Aorta (tissue), 5 donors: ENCODE measurements at regions of chr2 and their contacts with region 1.

Region 1: DNA sequence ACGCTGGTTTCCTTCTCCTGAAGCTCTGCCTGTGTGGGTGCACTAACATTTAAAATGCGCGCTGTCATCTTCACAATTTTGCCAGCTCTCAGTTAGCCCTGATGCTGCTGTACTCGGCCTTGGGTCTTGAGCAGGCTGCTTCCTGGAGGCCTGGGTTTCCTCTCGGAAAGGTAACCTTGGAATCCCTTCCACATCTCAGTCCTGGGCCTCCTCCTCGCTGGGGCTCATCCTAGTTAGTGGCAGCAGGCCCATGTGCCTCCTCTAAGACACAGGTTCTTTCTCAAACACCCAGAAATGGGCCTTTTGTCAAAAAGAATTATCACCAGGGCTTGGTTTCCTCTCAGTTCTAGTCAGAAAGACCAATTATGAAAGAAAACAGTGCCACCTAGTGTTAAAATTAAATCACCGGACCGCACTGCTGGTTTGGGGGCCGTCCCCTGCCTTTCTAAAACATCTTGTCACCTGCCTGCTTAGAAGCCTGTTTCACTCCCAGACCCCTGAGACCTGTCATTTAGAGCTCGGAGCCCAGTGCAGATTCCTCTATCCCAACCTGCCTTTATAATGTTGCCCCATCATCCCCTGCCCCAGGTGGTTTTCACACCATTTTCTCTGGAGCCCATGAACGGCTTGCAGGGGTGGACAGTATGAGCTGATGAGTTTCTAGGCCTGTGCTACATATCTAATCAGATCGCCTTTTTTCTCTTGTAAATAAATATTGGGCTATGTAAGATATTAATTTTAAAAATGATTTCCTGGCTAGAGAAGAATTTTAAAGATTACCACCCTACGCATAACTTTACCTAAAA is 42.4 kb downstream of the HK2 start:
- DNase-seq: no peak
- ATAC-seq: peak; percentile 83
- H3K4me3 ChIP-seq: no peak overlapping the region
- H3K27ac ChIP-seq: no peak overlapping the region
- H3K4me1 ChIP-seq: no peaks in the 10 kb centered on the region
- H3K27me3 ChIP-seq: no peaks in the 10 kb centered on the region

Region 2: GRCh38 chr2:74690571-74690970 is 185.7 kb before region 1 on chr2:
- intact Hi-C with region 1: loop called (anchors 1 to 5 kb)
- DNase-seq: no peak
- ATAC-seq: peak; percentile 87
- H3K4me3 ChIP-seq: no peak overlapping the region
- H3K27ac ChIP-seq: no peak overlapping the region
- H3K4me1 ChIP-seq: no peaks in the 10 kb centered on the region
- H3K27me3 ChIP-seq: no peaks in the 10 kb centered on the region

Region 3: DNA sequence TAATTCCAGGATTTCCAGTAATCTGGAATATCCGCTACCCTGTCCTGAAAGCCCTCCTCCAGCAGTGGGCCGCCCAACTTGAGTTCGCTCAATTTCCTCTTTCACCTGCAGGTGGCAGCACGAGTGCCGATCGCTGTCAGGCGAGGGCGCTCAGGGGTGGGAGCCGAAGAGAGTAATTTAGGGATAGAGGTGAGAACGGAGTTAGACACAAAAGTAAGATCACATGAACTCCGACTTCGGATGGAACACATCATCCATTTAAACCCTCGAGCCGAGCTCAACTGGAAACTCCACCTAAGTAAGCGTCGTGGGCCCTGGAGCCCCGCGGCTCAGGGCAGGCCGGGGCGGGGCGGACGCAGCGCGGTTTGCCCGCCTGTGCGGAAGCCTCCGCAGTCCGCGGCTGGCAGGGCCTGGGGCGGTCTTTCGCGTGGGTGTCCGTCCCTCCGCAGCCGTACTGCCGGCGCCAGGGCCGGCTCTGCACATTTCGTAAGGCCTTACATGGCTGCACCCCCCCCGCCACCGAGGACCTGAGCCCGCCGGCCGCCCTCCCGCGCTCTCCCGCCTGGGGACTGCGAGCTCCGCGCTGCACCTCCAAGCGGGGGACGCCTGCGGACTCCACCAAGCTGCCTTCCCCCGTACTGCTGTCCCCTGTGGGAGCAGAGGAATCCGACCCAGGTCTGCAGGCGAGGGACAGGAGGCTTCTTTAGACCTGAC is 161.0 kb before region 1 on chr2:
- intact Hi-C with region 1: loop called (anchors 1 to 2 kb)
- DNase-seq: peak; percentile 86 to 94
- ATAC-seq: peak; percentile 95
- H3K4me3 ChIP-seq: peak overlapping the region; percentile 31 to 32
- H3K27ac ChIP-seq: peak overlapping the region in 1 of 2 donors; percentile 11
- H3K4me1 ChIP-seq: no peaks in the 10 kb centered on the region
- H3K27me3 ChIP-seq: no peaks in the 10 kb centered on the region

Region 4: GRCh38 chr2:74816540-74817303 is 59.6 kb before region 1 on chr2:
- intact Hi-C with region 1: no loop called
- DNase-seq: no peak
- ATAC-seq: no peak
- H3K4me3 ChIP-seq: no peak overlapping the region
- H3K27ac ChIP-seq: no peak overlapping the region
- H3K4me1 ChIP-seq: no peaks in the 10 kb centered on the region
- H3K27me3 ChIP-seq: no peaks in the 10 kb centered on the region

Region 5: GRCh38 chr2:75233965-75234364 is 357.7 kb after region 1 on chr2:
- intact Hi-C with region 1: no loop called
- DNase-seq: no peak
- ATAC-seq: no peak
- H3K4me3 ChIP-seq: no peak overlapping the region
- H3K27ac ChIP-seq: no peak overlapping the region
- H3K4me1 ChIP-seq: no peaks in the 10 kb centered on the region
- H3K27me3 ChIP-seq: no peaks in the 10 kb centered on the region